Gastrocnemius medialis (tissue), 4 donors: ENCODE measurements at regions of chr15 and their contacts with region 1.

Region 1: DNA sequence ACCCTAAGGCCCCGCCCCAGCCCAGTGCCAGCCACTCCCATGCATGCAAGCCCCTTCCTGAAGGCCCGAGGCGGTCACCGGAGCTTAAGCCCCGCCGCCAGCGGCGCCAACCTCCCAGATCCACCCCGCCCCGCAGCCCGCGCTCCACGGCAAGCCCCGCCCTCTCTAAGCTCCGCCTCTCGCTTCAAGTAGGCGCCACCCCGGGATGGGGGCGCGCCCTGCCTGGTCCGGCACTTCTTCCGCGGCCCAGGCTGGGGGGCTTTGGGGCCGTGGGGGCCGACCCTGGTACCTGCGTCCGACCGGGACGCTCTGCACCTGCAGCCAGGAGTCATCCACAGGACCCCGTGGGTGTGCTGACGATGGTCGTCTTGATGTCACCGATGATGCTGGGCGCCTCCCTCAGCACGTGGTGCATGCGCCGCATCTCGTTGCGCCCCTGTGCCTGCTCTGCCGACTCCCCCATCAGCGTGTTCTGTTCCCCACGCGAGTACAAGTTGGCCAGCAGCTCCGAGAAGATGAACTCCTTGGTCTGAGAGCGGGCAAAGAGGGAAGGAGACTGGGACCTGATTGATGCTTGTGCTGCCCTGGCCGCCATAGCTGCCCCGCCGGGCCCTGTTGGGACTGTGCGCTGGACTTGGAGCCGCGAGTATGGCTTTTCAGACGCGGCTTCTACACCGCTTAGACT is 26.1 kb upstream of the CSPG4 start:
- DNase-seq: peak; percentile 76 to 91
- ATAC-seq: peak; percentile 90 to 94
- H3K4me3 ChIP-seq: peak overlapping the region; percentile 57 to 92 (median 76)
- H3K27ac ChIP-seq: peak overlapping the region in 1 of 4 donors; percentile 48
- H3K4me1 ChIP-seq: peaks cover 0 to 11% of the 10 kb centered on the region in 2 donors
- H3K27me3 ChIP-seq: no peaks in the 10 kb centered on the region
- CTCF ChIP-seq: no peak
- POLR2A ChIP-seq: peak in 1 of 2 donors; percentile 8

Region 2: DNA sequence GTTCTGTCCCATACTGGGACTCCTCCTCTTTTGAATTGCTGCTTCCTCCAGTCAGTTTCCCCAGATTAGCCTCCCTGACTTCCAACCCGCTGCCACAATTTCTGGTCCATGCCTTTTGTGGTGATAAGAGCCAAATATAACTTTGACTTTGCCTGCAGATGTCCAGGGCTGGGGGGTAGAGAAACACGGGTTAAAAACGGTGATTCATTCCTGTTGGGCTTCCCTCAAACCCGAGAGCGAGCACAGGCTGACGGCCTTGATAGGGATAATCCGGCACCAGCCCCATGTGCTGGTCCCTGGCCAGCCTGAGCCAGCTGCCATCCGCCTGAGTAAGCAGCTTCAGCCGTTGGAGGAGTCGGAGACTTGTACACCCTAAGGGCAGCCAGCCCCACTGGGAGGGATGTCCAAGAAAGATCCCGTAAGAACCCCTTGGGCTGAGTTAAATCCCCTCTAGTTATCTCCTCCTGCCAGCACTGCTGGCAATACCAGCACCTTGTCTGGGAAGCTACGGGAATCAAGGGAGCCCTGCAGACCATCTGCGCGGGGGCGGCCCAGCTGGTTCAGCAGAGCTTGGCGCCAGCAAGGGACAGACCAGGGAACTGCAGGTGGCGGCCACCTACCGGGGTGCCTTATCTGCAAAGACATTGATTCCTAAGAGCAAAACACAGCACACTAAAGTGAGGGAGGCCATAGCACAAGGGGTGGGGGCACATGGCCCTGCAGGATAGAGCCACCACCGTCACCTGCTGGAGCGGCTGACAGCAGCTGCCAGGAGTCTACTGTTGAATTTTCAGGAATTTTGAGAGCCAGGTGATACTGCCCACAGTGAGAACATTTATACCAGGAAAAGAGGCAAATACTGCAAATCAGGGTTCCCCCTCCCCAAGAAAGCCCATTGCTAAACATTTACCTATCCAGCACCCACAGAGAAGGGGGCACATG is 44.3 kb before region 1 on chr15:
- in situ Hi-C with region 1: loop called in 2 of 4 experiments (anchors 10 kb)
- intact Hi-C with region 1: loop called (anchors 5 kb)
- DNase-seq: peak; percentile 56 to 83
- ATAC-seq: peak; percentile 93 to 96
- H3K4me3 ChIP-seq: peak overlapping the region in 1 of 4 donors; percentile 37
- H3K27ac ChIP-seq: peak overlapping the region; percentile 58 to 68 (median 63)
- H3K4me1 ChIP-seq: peaks cover 24% of the 10 kb centered on the region in 2 donors
- H3K27me3 ChIP-seq: no peaks in the 10 kb centered on the region
- CTCF ChIP-seq: peak in 3 of 5 experiments; percentile 14 to 56 (median 15)
- POLR2A ChIP-seq: no peak